Transverse colon (tissue), 4 donors: ENCODE measurements at regions of chr13 and their contacts with region 1.

Region 1: DNA sequence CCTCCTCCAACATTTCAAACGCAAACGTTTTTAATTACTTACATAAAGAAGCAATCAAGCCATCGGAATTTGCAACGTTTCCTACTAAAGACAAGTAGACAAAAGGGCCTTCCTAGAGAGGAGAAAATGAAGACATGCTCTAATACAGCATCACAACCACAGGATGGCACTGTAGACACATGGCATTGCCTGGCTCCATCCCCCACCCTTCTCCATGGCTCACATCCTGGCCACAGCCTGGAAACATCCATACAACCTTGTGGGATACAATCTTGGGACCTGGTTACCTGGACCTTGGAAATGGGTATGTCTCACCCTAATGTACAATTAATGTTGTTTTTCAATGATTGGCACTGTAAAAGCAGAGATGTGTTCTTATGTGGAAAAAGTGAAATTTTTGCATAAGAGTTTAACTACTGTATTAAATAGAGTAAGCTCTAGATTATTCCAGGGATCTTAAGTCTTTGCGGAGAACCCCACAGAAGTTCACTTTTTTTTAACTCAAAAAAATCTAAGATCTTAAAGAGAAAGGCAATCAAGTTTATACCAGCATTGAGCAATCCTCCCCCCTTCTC is 21.5 kb downstream of the EBPL start:
- DNase-seq: peak; percentile 60
- H3K4me3 ChIP-seq: no peak overlapping the region
- H3K27ac ChIP-seq: no peak overlapping the region
- H3K4me1 ChIP-seq: no peaks in the 10 kb centered on the region
- H3K27me3 ChIP-seq: no peaks in the 10 kb centered on the region
- CTCF ChIP-seq: peak; percentile 56 to 72 (median 60)
- EP300 ChIP-seq: no peak
- POLR2A ChIP-seq: no peak

Region 2: DNA sequence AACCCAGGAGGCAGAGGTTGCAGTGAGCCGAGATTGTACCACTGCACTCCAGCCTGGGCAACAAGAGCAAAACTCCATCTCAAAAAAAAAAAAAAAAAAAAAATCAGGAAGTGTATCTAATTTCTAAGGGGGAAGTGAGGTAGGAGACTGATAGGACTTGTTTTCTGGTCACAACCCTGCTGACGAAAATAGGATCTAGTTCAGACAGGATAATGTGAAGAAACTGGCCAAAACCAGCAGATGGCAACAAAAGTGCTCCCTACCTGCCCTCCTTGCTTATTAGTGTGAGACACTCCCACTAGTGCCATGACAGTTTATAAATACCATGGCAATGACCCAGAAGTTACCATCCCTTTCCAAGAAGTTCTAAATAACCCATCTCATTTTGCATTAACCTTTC is 158.6 kb after region 1 on chr13:
- in situ Hi-C with region 1: loop called in 1 of 4 experiments (anchors 25 kb)
- intact Hi-C with region 1: no loop called
- DNase-seq: no peak
- H3K4me3 ChIP-seq: no peak overlapping the region
- H3K27ac ChIP-seq: no peak overlapping the region
- H3K4me1 ChIP-seq: no peaks in the 10 kb centered on the region
- H3K27me3 ChIP-seq: no peaks in the 10 kb centered on the region
- CTCF ChIP-seq: no peak
- EP300 ChIP-seq: no peak
- POLR2A ChIP-seq: no peak